Activated T-helper 1 cell treated with anti-CD3 and anti-CD28 coated beads, Interleukin-12 subunit alpha, Interleukin-12 subunit beta, Interleukin-2, Interleukin-4 antibody, amounts not matched to agents 30 ng/mL and 10 ng/mL and 1 ng/mL, durations not matched to agents 14 hours and 24 hours and 36 hours (primary cell): ENCODE measurements at regions of chr20 and their contacts with region 1.

Region 1: DNA sequence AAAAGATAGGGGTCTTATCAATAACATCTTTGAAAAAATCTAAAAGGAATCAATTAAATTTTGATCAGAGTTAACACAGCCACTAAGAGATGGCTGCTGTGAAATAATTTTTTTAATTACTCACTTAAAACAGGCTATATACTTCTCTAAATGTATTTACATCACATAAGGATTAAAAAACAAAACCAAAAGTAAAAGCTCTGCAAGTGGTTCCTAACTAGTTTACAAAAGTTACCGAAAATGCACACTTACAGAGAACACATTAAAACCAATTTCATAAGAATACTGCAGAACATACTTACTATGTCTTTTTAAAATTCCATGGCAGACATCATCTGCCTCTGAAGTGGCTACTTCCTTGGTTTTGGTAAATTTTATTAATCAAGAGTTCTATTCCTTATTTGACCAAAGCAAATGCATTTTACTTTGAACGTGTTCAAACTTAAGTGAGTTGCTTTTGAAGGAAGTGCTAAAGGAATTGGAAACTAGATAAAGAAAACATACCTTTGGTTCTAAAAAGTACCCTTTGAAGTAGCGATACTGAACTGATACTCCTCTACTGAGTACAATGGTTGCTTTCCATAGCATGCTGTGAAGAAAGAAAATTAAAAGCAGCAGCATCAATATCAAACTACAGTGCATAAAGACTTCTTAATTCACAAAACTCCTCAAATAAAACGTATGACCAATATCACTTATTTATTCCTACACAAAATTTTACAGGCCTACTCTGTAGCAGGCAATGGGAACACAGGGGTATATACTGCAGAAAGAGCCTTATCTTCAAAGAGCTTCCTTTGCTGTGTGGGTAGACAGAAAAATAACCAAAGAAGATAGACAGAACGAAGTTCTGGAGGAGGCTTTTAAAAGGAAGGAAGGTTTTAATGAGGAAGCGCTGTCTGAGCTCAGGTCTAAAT is 157.1 kb upstream of the SHLD1 start:
- DNase-seq: no peak
- H3K4me3 Mint-ChIP-seq: peak overlapping the region; percentile 80
- H3K27ac Mint-ChIP-seq: peak overlapping the region; percentile 89
- H3K4me1 Mint-ChIP-seq: peaks cover 71% of the 10 kb centered on the region
- H3K27me3 Mint-ChIP-seq: no peaks in the 10 kb centered on the region

Region 2: DNA sequence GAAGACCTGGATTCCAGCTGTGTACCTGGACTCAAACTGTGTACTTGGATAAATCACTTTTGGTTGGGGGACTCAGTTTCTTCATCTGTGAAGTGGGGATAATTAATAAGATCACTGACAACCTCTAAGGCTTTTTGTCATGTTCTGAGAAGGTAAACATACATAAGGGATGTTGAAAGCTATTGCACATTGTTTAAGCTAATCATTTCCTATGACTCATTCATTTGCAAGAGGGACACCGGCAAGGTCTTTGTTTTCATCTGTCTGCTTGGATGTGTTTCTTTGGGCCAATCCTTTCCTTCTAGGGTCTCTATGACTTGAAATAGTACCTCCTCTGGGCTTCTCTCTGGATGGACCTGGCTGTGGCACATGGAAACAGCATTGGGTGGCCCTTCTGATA is 283.1 kb before region 1 on chr20:
- intact Hi-C with region 1: no loop called
- DNase-seq: no peak
- H3K4me3 Mint-ChIP-seq: no peak overlapping the region
- H3K27ac Mint-ChIP-seq: no peak overlapping the region
- H3K4me1 Mint-ChIP-seq: no peaks in the 10 kb centered on the region
- H3K27me3 Mint-ChIP-seq: peaks cover 12% of the 10 kb centered on the region

Region 3: DNA sequence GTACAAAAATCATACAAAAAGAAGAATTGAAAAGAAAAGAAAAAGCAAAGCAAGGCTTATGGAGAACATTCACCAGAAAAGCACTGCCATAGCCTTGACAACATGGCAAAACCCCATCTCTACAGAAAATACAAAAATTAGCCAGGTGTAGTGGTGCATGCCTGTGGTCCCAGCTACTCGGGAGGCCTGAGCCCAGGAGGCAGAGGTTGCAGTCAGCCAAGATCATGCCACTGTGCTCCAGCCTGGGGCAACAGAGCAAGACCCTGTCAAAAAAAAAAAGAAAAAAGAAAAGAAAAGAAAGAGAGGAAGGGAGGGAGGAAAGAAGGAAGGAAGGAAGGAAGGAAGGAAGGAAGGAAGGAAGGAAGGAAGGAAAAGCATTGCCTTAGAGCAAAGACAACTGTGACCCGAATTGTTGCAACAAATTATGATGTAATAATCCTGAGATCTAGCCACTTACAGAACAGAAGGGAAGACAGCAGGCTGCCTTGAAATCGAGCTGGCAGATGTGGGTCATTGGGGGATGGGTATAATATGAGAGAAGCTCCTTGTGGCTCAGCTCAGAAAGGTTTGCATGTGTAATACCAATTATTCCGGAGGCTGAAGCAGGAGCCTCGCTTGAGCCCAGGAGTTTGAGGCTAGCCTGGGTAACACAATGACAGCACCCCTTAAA is 68.3 kb before region 1 on chr20:
- intact Hi-C with region 1: no loop called
- DNase-seq: no peak
- H3K4me3 Mint-ChIP-seq: no peak overlapping the region
- H3K27ac Mint-ChIP-seq: no peak overlapping the region
- H3K4me1 Mint-ChIP-seq: peaks cover 11% of the 10 kb centered on the region
- H3K27me3 Mint-ChIP-seq: peaks cover 7% of the 10 kb centered on the region

Region 4: DNA sequence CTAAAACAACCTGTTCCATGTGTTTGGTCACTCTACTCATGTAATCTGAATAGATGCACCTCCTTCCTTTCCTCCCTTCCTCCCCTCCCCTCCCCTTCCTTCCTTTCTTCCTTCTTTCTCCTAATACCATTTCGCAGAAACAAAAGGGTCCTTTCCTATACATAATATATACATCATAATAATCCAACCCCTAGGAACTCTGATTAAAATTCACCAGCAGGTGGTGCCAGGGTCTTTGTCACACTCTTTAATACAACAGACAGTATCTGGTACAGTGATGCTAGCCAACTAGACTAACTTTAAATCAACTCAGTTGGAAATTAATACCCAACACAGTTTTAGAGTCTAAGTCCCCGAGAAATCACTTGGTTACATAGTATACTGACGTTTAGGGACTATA is 24.1 kb before region 1 on chr20:
- intact Hi-C with region 1: loop called (anchors 2 kb)
- DNase-seq: no peak
- H3K4me3 Mint-ChIP-seq: no peak overlapping the region
- H3K27ac Mint-ChIP-seq: peak overlapping the region; percentile 56
- H3K4me1 Mint-ChIP-seq: peaks cover 23% of the 10 kb centered on the region
- H3K27me3 Mint-ChIP-seq: no peaks in the 10 kb centered on the region

Region 5: GRCh38 chr20:5608442-5609161 is 15.5 kb after region 1 on chr20:
- intact Hi-C with region 1: loop called (anchors 1 kb)
- DNase-seq: no peak
- H3K4me3 Mint-ChIP-seq: peak overlapping the region; percentile 99
- H3K27ac Mint-ChIP-seq: peak overlapping the region; percentile 57
- H3K4me1 Mint-ChIP-seq: peaks cover 53% of the 10 kb centered on the region
- H3K27me3 Mint-ChIP-seq: peaks cover 3% of the 10 kb centered on the region

Region 6: DNA sequence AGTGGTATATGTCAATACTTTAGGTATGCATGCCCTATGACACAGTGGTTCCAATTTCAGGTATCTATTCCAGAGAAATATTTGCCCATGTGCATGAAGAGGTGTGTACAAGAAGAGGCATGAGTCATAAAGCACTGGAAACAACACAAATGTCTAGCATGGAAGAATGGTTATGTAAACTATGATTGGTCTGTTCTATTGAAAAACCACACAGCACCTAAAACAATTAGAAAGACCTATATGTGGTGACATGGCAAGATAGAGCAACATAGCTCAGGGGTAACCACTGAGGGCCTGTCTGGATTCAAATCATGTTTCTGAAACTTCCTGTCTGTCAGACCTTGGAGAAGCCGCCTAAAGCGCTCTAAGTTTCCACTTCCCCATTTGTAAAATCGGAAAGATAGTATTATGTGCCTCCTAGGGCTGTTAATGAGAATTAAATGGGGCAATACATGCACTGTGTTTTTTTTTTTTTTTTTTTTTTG is 81.1 kb after region 1 on chr20:
- intact Hi-C with region 1: loop called (anchors 1 kb)
- DNase-seq: no peak
- H3K4me3 Mint-ChIP-seq: no peak overlapping the region
- H3K27ac Mint-ChIP-seq: peak overlapping the region; percentile 5
- H3K4me1 Mint-ChIP-seq: peaks cover 7% of the 10 kb centered on the region
- H3K27me3 Mint-ChIP-seq: peaks cover under 1% of the 10 kb centered on the region

Region 7: GRCh38 chr20:5749952-5750779 is 157.1 kb after region 1 on chr20 and contains the start of gene SHLD1:
- intact Hi-C with region 1: loop called (anchors 5 kb)
- DNase-seq: peak; percentile 69
- H3K4me3 Mint-ChIP-seq: peak within 1 kb of the TSS; percentile 87
- H3K27ac Mint-ChIP-seq: peak within 1 kb of the TSS; percentile 87
- H3K4me1 Mint-ChIP-seq: peaks cover 23% of the 10 kb centered on the region
- H3K27me3 Mint-ChIP-seq: peaks cover 8% of the 10 kb centered on the region
- total RNA-seq, gene SHLD1: 8.1 and 10.8 TPM in 2 replicates

Region 8: GRCh38 chr20:5844063-5844681 is 251.1 kb after region 1 on chr20:
- intact Hi-C with region 1: loop called (anchors 2 kb)
- DNase-seq: peak; percentile 41
- H3K4me3 Mint-ChIP-seq: peak overlapping the region; percentile 70
- H3K27ac Mint-ChIP-seq: peak overlapping the region; percentile 84
- H3K4me1 Mint-ChIP-seq: peaks cover 35% of the 10 kb centered on the region
- H3K27me3 Mint-ChIP-seq: peaks cover 3% of the 10 kb centered on the region

Region 9: GRCh38 chr20:5950271-5951031 is 357.4 kb after region 1 on chr20 and contains the starts of genes MCM8 and TRMT6:
- intact Hi-C with region 1: loop called (anchors 5 kb)
- DNase-seq: peak; percentile 95
- H3K4me3 Mint-ChIP-seq: peak within 1 kb of the TSS; percentile 90
- H3K27ac Mint-ChIP-seq: peak within 1 kb of the TSS; percentile 91
- H3K4me1 Mint-ChIP-seq: peaks cover 56% of the 10 kb centered on the region
- H3K27me3 Mint-ChIP-seq: peaks cover 2% of the 10 kb centered on the region
- total RNA-seq, gene MCM8: 36.5 and 38.8 TPM in 2 replicates
- total RNA-seq, gene TRMT6: 36.1 and 38.9 TPM in 2 replicates